PC-3 (cell line): ENCODE measurements at regions of chr16 and their contacts with region 1.

Region 1: GRCh38 chr16:58152246-58152868 is 23.2 kb upstream of the CFAP20 start:
- DNase-seq: no peak
- ATAC-seq: no peak
- H3K4me3 ChIP-seq: no peak overlapping the region
- H3K27ac ChIP-seq: no peak overlapping the region
- H3K4me1 ChIP-seq: no peaks in the 10 kb centered on the region
- H3K27me3 ChIP-seq: no peaks in the 10 kb centered on the region
- CTCF ChIP-seq: no peak

Region 2: DNA sequence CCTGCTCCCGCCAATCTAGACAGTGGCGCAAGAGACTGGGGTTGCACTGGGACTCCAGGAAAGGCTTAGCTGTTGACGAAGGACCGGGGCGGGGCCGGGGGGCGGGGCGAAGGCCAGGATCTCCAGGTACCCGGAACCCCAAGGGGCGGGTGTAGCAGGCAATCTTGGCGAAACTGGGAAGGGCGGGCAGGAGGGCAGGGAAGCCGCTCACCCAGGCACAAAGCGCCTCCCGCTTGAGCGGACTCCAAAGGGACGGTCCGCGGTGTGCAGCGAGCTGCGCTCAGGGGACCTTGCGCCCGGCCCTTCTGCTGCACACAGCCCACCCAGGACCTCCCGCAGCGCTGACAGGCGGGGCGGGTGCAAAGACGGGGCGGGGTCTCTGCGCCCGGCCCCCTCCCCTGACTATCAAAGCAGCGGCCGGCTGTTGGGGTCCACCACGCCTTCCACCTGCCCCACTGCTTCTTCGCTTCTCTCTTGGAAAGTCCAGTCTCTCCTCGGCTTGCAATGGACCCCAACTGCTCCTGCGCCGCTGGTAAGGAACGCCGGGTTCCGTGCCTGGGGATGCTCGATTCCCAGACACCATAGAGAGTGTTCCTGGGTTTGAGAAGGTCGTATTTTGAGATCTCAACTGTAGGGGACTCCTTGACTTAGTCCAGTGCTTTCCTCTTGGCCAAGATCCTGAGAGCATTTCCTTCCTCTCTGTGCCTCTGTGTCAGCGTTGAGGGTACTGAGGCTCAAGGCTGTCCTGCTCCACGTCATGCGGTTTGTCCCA is 1494.6 kb before region 1 on chr16 and contains the start of gene MT1F:
- CTCF ChIA-PET with region 1: no interaction called
- POLR2A ChIA-PET with region 1: interaction called, 21 read pairs
- intact Hi-C with region 1: no loop called
- DNase-seq: peak; percentile 76
- ATAC-seq: peak; percentile 94
- H3K4me3 ChIP-seq: peak within 1 kb of the TSS; percentile 83
- H3K27ac ChIP-seq: 0 out of 2 replicates have a peak within 1 kb of the TSS, but pooled peaks have one; percentile 1
- H3K4me1 ChIP-seq: peaks cover 9% of the 10 kb centered on the region; the same call in 1 of the 2 replicates
- H3K27me3 ChIP-seq: no peaks in the 10 kb centered on the region
- CTCF ChIP-seq: no peak
- total RNA-seq, gene MT1F: 15.2 and 27.3 TPM in 2 replicates

Region 3: DNA sequence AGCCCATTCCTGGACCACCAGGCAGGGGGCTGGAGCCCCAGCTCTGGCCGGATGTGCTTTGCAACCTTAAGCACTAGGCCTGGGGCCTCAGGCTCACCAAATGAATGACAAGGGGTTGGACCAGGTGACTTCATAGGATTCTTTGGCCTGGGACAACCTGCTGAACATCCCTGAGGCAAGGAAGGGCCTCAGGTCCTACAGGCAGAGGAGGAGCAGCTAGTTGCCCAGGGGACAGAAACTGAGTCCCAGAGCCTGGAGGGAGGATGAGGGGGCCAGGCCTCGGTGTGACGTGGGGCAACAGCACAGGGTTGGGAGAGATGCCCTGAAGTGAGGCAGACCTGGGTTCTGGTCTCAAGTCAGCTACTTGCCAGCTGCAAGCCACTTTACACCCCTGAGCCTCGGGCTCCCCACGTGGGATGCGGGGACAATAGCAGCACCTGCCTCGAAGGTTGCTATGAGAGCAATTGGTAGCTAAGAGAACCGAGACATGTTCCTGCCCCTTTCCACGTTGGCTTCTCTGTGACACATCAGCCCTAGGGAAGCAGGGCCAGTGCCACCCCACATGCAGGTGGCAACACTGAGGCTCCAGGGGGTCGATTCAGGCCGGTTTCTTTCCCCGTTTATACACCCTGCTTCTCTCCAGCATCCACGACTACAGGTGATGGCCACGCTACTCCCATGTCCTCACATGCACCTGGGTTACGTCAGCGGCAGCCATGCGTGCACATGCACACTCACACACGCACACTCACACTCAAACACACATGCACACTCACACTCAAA is 65.7 kb before region 1 on chr16:
- CTCF ChIA-PET with region 1: no interaction called
- POLR2A ChIA-PET with region 1: no interaction called
- intact Hi-C with region 1: no loop called
- DNase-seq: no peak
- ATAC-seq: no peak
- H3K4me3 ChIP-seq: no peak overlapping the region
- H3K27ac ChIP-seq: no peak overlapping the region
- H3K4me1 ChIP-seq: no peaks in the 10 kb centered on the region
- H3K27me3 ChIP-seq: no peaks in the 10 kb centered on the region
- CTCF ChIP-seq: no peak